Activated T-helper 1 cell treated with anti-CD3 and anti-CD28 coated beads, Interleukin-12 subunit alpha, Interleukin-12 subunit beta, Interleukin-2, Interleukin-4 antibody, amounts not matched to agents 30 ng/mL and 10 ng/mL and 1 ng/mL, durations not matched to agents 14 hours and 24 hours and 36 hours (primary cell): ENCODE measurements at regions of chr1 and their contacts with region 1.

Region 1: DNA sequence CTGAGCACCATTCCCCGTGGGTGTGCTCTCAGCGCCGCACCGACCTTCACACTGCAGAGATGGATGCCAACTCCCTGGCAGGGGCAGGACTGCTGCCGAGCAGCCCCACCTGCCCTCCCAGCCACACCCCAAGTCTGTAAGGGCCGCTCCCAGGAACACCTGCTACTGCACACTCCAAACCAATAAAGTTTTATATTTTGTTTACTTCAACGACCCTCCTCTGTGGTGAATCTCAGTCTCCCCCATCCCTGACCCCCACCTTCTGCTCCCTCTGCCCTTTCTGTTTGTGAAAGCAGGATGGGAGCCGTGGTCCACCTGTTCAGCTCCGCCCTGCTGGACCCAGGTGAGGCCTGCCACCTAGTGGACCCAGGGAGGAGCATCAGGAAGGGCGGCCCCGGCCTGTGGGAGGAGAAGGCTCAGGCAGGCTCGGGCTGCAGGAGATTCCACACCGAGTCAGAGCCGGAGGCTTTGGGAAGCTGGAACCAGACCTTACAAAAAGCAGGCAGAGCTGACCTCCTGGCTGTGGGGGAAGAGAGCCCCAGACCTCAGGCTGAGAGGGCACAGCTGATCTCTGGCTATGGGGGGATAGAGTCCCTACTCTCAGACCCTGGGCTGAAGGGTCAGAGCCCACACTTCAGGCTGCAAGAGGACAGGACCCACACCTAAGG is 982 bp upstream of the TMEM82 start:
- DNase-seq: peak; percentile 65
- H3K4me3 Mint-ChIP-seq: no peak overlapping the region
- H3K27ac Mint-ChIP-seq: no peak overlapping the region
- H3K4me1 Mint-ChIP-seq: peaks cover 6% of the 10 kb centered on the region
- H3K27me3 Mint-ChIP-seq: no peaks in the 10 kb centered on the region

Region 2: DNA sequence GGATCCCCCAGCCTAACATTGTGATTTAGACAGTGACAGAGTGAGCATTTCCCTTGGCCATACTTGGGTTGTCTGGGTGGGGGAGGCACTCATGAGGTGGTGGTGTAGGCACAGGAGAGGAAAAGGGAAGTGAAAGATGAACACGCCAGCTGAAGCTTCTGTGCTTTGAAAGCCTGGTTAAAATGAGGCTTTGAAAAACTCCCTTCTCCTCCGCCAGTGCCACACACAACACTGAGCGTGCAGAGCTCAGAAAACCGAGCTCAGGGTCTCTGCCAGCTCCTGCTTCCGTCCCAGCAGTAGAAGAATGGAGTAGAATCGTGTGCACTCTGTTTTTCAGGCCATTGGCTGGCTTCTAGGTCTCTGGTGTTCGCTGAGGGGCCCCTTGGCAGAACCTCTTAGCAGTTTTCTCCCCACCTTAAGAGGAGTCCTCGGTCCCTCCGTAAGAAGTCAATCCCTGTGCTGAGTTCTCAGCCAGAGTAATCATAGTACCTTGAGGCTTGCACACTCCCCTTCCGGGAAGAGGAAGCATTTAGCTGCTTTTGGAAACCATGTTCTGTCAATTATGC is 44.3 kb before region 1 on chr1:
- intact Hi-C with region 1: loop called (anchors 1 kb)
- DNase-seq: peak; percentile 47
- H3K4me3 Mint-ChIP-seq: peak overlapping the region; percentile 86
- H3K27ac Mint-ChIP-seq: peak overlapping the region; percentile 95
- H3K4me1 Mint-ChIP-seq: peaks cover 32% of the 10 kb centered on the region
- H3K27me3 Mint-ChIP-seq: no peaks in the 10 kb centered on the region